ENCODE measurements at regions of chr12 and their contacts with region 1.

Region 1: GRCh38 chr12:110431957-110432587 is 18.1 kb downstream of the ARPC3 start:
- DNase-seq: no peak
- ATAC-seq: no peak
- H3K4me3 ChIP-seq: peak overlapping the region; percentile 50
- H3K27ac ChIP-seq: peak overlapping the region in 1 of 2 donors; percentile 48
- H3K4me1 ChIP-seq: peaks cover 0 to 8% of the 10 kb centered on the region in 2 donors
- H3K27me3 ChIP-seq: no peaks in the 10 kb centered on the region
- CTCF ChIP-seq: no peak

Region 2: DNA sequence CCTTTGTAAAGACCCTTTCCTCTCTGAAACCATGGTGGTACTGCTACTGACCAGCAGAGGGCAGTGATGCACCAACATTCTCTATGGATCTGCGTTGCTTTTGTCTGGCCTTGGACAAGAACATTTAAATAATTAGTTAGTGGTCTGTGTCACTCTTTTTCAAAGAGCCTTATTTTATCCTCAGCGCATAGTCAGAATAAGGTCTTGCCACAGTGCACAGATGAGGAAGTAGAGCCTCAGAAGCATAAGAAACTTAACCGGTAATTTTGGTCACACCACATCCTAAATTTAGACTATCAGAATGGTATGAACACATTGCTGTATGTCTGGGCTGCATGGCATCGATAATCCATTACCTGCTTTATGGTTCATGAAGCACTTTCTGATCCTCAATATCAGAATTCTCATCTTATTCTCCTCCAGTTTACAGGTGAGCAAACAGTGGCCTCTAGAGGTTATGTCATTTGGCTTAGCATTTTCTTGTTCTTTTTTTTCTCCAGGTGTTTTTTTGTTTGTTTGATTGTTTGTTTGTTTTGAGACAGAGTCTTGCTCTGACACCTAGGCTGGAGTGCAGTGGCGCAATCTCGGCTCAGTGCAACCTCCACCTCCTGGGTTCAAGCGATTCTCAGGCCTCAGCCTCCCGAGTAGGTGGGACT is 331.6 kb before region 1 on chr12:
- intact Hi-C with region 1: loop called in 1 of 2 experiments (anchors 10 kb)
- DNase-seq: peak in 3 of 4 donors; percentile 54 to 83 (median 70)
- ATAC-seq: peak; percentile 91
- H3K4me3 ChIP-seq: no peak overlapping the region
- H3K27ac ChIP-seq: no peak overlapping the region
- H3K4me1 ChIP-seq: peaks cover 0 to 19% of the 10 kb centered on the region in 2 donors
- H3K27me3 ChIP-seq: no peaks in the 10 kb centered on the region
- CTCF ChIP-seq: peak; percentile 83 to 89

Region 3: GRCh38 chr12:110403146-110403975 is 28.7 kb before region 1 on chr12 and contains the start of gene ANAPC7:
- intact Hi-C with region 1: no loop called
- DNase-seq: peak; percentile 85 to 97 (median 92)
- ATAC-seq: peak; percentile 99
- H3K4me3 ChIP-seq: peak within 1 kb of the TSS; percentile 98 to 100
- H3K27ac ChIP-seq: peak within 1 kb of the TSS; percentile 94 to 96
- H3K4me1 ChIP-seq: peaks cover 4 to 14% of the 10 kb centered on the region in 2 donors
- H3K27me3 ChIP-seq: no peaks in the 10 kb centered on the region
- CTCF ChIP-seq: no peak
- polyA plus RNA-seq, gene ANAPC7: 72.5 to 94.6 (median 88.1) TPM

Region 4: GRCh38 chr12:110957652-110958051 is 525.6 kb after region 1 on chr12:
- intact Hi-C with region 1: no loop called
- DNase-seq: no peak
- ATAC-seq: no peak
- H3K4me3 ChIP-seq: no peak overlapping the region
- H3K27ac ChIP-seq: no peak overlapping the region
- H3K4me1 ChIP-seq: no peaks in the 10 kb centered on the region
- H3K27me3 ChIP-seq: peaks cover 0 to 34% of the 10 kb centered on the region in 2 donors
- CTCF ChIP-seq: no peak